Activated CD4-positive, alpha-beta T cell treated with anti-CD3 and anti-CD28 coated beads, Interleukin-2, amount 10 ng/mL, durations not matched to agents 24 days and 14 days (primary cell): ENCODE measurements at regions of chr17 and their contacts with region 1.

Region 1: DNA sequence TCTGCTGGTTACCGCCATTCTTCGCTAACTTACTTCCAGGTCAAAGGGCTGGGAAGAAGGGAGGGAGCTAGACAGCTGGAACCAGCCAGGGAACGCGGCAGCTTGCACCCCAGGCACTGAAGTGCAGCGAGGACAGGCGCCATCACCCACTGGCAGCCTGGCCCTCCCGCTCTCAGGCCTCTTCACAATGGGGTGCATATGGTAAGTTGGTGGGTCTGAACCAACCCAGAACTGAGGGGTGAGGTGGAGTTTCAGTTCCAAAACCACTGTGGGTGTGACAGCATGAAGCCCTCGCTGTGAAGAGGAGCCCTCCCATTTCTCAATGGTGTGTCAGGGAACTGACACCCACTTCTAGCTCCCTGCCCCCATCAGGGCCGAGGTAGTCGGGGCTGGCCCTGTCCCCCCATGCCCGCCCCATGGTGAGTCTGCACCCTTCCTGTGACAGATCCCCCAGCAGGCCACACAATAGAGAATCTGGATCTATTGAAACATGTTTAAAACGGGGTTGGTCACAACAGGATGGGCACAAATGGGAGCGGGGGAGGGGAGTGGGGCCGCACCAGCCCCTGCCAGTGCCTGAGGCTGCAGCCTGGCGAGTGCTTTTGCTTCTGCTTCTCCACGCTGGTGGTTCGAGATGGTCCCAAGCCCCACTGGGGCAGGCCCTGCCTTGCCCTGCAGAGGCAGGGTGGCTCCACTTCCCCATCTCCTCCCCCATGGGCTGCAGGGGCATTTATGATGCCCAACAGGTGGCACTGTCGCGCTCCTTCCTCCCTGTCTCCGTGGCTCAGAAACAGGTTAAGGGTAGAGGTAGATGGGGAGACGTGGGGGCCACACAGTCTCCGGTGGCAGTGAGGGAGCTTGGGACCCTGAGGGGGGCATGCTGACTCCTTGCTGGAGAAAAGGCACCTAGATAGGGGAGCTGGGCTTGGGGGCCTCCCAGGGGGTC is 2.3 kb downstream of the LIMD2 start:
- DNase-seq: peak; percentile 94
- H3K4me3 Mint-ChIP-seq: peak overlapping the region; percentile 93
- H3K27ac Mint-ChIP-seq: peak overlapping the region; percentile 93
- H3K4me1 Mint-ChIP-seq: peaks cover 43% of the 10 kb centered on the region
- H3K27me3 Mint-ChIP-seq: no peaks in the 10 kb centered on the region

Region 2: DNA sequence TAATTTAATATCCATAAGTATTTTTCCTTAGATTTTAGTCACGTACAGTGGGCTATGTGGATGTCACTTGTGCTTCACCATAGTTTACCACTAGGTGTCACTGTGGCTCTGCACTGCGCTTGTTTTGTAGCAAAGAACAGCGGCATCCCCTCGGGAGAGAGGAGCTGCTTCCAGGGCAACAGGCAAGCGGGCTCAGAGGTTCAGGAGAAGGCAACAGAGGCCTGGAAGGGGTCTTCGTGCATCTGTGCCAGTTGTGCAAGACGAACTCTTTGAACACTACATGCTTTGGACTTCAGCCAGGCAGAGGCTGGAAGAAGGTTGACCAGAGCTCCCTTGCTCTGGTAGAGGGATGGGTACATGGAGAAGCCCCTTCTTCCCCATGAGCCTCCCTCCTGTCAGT is 272.1 kb before region 1 on chr17:
- intact Hi-C with region 1: loop called (anchors 5 kb)
- DNase-seq: peak; percentile 93
- H3K4me3 Mint-ChIP-seq: no peak overlapping the region
- H3K27ac Mint-ChIP-seq: no peak overlapping the region
- H3K4me1 Mint-ChIP-seq: peaks cover 40% of the 10 kb centered on the region
- H3K27me3 Mint-ChIP-seq: peaks cover 2% of the 10 kb centered on the region

Region 3: DNA sequence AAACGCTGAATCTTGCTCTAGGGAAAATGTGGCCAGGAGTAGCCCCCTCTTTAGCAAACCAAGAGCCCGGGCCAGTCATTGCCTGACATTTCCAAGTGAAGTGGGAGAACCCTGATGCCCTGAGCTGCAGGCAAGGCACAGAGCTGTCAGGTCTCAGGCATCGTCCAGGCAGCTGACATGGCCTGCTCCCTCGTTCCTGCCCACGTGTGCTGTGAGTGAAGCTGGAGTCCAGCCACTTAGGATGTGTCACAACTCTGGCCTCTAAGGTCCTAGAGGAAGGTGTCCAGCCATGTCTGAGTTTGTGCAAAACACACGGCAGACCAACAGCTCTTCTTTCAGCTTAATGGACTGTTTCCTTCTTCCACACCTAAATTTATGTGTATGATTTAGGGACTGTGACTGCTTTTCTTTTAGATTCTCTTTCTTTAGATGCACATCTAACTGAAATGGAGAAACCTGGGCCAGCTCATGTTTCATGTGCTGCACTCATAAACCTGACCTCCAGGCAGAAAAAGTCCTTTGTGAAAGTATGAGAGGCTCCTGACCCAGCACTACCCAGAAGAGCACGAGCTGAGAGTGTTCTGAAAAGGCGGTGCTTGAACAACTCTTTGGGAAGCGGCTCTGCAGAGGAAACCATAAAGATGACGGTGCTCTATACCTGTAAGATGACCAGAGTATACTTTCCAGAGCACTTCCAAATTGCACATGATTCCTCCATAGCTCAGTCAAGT is 17.1 kb after region 1 on chr17:
- intact Hi-C with region 1: loop called (anchors 1 kb)
- DNase-seq: no peak
- H3K4me3 Mint-ChIP-seq: no peak overlapping the region
- H3K27ac Mint-ChIP-seq: no peak overlapping the region
- H3K4me1 Mint-ChIP-seq: peaks cover 9% of the 10 kb centered on the region
- H3K27me3 Mint-ChIP-seq: no peaks in the 10 kb centered on the region

Region 4: DNA sequence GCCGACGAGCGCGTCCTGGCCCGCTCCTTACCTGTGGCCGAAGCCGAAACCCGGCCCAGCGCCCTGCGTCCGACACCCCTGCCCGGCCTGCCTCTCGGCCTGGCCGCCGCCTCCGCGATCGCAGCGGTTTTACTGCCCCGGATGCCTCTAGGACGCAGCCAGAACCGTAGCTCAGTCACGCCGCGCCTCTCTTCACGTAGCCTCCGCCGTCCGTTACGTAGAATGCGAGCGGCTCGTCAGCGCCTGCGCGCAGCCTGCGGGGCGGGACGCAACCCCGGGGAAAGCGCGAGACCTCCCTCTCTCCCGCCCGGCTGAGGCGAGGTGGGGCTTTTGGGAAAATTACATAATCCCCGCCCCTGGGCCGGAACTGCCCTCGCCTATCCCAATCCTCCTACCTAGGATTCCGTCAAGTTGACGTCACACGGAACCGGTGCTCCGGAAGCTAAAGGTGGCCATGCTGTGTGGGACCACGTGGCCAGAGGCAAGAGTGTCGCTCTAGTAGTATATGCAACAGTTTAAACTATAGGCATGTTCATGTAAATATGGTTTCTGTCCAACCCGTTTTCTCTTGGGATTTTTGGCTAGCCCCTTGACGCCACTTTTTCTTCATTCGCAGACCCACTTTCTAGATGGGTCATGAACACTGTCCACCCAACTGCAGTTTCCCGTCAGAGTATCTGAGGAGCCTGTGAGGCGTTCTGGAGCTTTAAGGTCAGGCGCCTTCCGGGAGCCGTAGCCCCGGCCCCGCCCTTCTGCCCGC is 75.9 kb after region 1 on chr17 and contains the start of gene CCDC47:
- intact Hi-C with region 1: loop called (anchors 1 kb)
- DNase-seq: peak; percentile 100
- H3K4me3 Mint-ChIP-seq: peak within 1 kb of the TSS; percentile 99
- H3K27ac Mint-ChIP-seq: peak within 1 kb of the TSS; percentile 100
- H3K4me1 Mint-ChIP-seq: peaks cover 44% of the 10 kb centered on the region
- H3K27me3 Mint-ChIP-seq: peaks cover 2% of the 10 kb centered on the region
- total RNA-seq, gene CCDC47: 81.8 and 82.9 TPM in 2 replicates

Region 5: DNA sequence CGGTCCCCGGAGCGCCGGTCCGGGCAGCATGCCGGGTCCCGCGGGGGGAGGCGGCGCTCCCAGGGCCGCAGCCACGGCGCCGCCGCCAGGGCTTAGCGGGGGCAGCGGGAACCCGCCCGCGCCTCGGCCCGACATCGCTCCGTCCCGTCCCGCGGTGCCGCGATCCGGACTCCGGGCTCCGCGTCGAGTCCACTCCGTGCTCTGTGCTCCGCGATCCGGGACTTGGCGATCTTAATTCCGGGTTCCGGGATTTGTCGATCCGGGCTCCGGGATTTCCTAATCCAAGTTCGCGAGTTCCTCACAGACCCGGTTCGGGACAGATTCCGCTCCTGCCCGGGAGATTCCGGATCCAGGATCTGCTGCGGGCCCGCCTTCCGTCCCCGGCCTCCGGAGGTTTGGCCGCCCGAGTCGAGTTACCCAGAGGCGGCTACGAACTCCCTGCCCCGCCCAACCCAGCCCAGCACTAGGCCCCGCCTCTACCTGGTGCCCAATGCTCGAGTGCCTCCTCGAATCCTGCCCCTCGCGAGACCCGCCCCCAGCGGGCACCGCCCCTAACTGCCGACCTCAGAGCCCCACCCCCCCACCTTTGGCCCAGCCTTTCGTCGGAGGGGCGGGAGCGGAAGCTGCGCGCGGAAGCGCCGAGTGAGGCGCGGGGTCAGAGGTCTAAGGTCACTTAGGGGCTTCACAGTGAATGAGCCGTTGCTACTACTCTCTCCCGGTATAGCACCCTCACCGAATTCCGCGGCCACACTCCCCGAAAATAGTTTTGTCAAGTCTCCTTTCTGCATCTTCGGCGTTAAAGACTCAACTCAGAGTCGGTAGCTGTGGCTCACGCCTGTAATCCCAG is 145.1 kb after region 1 on chr17 and contains the start of gene SMARCD2:
- intact Hi-C with region 1: loop called (anchors 2 kb)
- DNase-seq: peak; percentile 99
- H3K4me3 Mint-ChIP-seq: peak within 1 kb of the TSS; percentile 98
- H3K27ac Mint-ChIP-seq: peak within 1 kb of the TSS; percentile 93
- H3K4me1 Mint-ChIP-seq: peaks cover 27% of the 10 kb centered on the region
- H3K27me3 Mint-ChIP-seq: no peaks in the 10 kb centered on the region
- total RNA-seq, gene SMARCD2: 120 and 121 TPM in 2 replicates